PC-9 (cell line): ENCODE measurements at regions of chr10 and their contacts with region 1.

Region 1: GRCh38 chr10:8365935-8366911 is 311.7 kb downstream of the GATA3 start:
- DNase-seq: peak; percentile 94 to 98
- H3K4me3 ChIP-seq: peak overlapping the region; percentile 34; the same call in 1 of the 2 replicates
- H3K27ac ChIP-seq: peak overlapping the region; percentile 98
- H3K4me1 ChIP-seq: peaks cover 30% of the 10 kb centered on the region
- H3K27me3 ChIP-seq: no peaks in the 10 kb centered on the region
- CTCF ChIP-seq: no peak

Region 2: DNA sequence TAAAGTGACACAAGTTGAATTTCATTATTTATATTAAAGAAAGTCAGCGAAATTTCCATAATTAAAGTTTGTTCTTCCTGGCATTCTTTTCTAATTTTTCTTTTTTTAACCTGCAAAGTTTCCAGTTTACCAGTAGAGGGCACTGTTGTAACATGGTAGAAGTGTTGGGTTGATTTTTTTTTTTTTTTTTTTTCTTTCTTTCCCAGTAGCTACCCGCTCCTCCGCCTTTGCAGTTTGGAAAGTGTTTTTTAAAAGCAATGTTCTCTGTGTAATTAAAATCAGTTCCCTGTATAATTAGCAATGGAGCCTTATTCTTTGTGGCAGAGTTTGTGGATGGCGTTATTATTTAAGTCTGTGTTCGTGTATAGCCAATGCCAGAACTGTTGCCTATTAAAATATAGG is 494.2 kb before region 1 on chr10:
- CTCF ChIA-PET with region 1: no interaction called
- POLR2A ChIA-PET with region 1: no interaction called
- intact Hi-C with region 1: loop called (anchors 1 kb)
- DNase-seq: peak in 1 of 2 experiments; percentile 5
- H3K4me3 ChIP-seq: peak overlapping the region; percentile 54; the same call in 1 of the 2 replicates
- H3K27ac ChIP-seq: no peak overlapping the region
- H3K4me1 ChIP-seq: peaks cover 8% of the 10 kb centered on the region
- H3K27me3 ChIP-seq: no peaks in the 10 kb centered on the region
- CTCF ChIP-seq: peak; percentile 74

Region 3: GRCh38 chr10:8088504-8088903 is 277.7 kb before region 1 on chr10:
- CTCF ChIA-PET with region 1: no interaction called
- POLR2A ChIA-PET with region 1: no interaction called
- intact Hi-C with region 1: no loop called
- DNase-seq: no peak
- H3K4me3 ChIP-seq: no peak overlapping the region
- H3K27ac ChIP-seq: no peak overlapping the region
- H3K4me1 ChIP-seq: no peaks in the 10 kb centered on the region
- H3K27me3 ChIP-seq: no peaks in the 10 kb centered on the region
- CTCF ChIP-seq: no peak

Region 4: GRCh38 chr10:8404391-8405120 is 38.3 kb after region 1 on chr10:
- CTCF ChIA-PET with region 1: no interaction called
- POLR2A ChIA-PET with region 1: no interaction called
- intact Hi-C with region 1: loop called (anchors 1 kb)
- DNase-seq: peak; percentile 24 to 77
- H3K4me3 ChIP-seq: peak overlapping the region; percentile 15; the same call in 1 of the 2 replicates
- H3K27ac ChIP-seq: peak overlapping the region; percentile 83
- H3K4me1 ChIP-seq: peaks cover 35% of the 10 kb centered on the region
- H3K27me3 ChIP-seq: no peaks in the 10 kb centered on the region
- CTCF ChIP-seq: no peak

Region 5: GRCh38 chr10:8616166-8616565 is 249.9 kb after region 1 on chr10:
- CTCF ChIA-PET with region 1: no interaction called
- POLR2A ChIA-PET with region 1: no interaction called
- intact Hi-C with region 1: loop called (anchors 1 kb)
- DNase-seq: peak; percentile 43 to 80
- H3K4me3 ChIP-seq: no peak overlapping the region
- H3K27ac ChIP-seq: peak overlapping the region; percentile 70
- H3K4me1 ChIP-seq: peaks cover 36% of the 10 kb centered on the region
- H3K27me3 ChIP-seq: no peaks in the 10 kb centered on the region
- CTCF ChIP-seq: no peak

Region 6: GRCh38 chr10:8705415-8705814 is 339.2 kb after region 1 on chr10:
- CTCF ChIA-PET with region 1: no interaction called
- POLR2A ChIA-PET with region 1: no interaction called
- intact Hi-C with region 1: loop called (anchors 1 kb)
- DNase-seq: no peak
- H3K4me3 ChIP-seq: no peak overlapping the region
- H3K27ac ChIP-seq: no peak overlapping the region
- H3K4me1 ChIP-seq: peaks cover 36% of the 10 kb centered on the region
- H3K27me3 ChIP-seq: no peaks in the 10 kb centered on the region
- CTCF ChIP-seq: no peak

Region 7: GRCh38 chr10:9302120-9302746 is 936.0 kb after region 1 on chr10:
- CTCF ChIA-PET with region 1: no interaction called
- POLR2A ChIA-PET with region 1: no interaction called
- intact Hi-C with region 1: loop called (anchors 5 kb)
- DNase-seq: peak in 1 of 2 experiments; percentile 61
- H3K4me3 ChIP-seq: no peak overlapping the region
- H3K27ac ChIP-seq: no peak overlapping the region
- H3K4me1 ChIP-seq: peaks cover 8% of the 10 kb centered on the region; the same call in 1 of the 2 replicates
- H3K27me3 ChIP-seq: no peaks in the 10 kb centered on the region
- CTCF ChIP-seq: peak; percentile 72

Region 8: DNA sequence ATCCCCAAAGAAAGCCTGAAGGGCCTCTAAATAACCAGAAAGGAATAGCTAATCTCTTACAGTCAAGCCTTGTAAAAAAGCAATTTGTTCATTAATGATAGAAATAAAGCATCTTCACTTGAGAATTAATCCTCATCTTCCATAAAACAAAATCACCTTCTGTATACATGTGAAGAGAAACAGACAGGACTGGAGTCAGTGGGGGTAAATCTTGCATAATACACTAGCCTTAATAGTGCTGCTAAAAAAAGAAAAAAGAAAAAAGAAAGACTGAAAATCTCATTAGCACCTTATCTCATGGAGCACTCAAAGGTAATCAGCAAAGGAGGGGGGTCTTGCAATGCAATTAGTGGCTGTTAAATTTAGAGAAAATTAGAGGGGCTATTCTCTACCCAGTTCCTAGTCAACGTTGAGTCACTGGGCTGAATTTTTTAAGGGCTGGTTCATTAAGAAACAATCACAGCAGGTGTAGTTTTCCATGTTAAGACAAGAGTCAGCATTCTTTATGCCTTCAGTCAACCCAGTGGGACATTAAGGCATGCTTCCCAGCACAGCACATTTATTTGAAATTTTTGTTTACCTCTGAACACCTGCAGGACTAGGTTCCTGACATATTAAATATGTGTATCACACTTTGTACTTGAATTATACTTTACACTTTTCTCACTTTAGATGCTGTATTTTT is 1195.7 kb after region 1 on chr10:
- CTCF ChIA-PET with region 1: no interaction called
- POLR2A ChIA-PET with region 1: no interaction called
- intact Hi-C with region 1: no loop called
- DNase-seq: no peak
- H3K4me3 ChIP-seq: no peak overlapping the region
- H3K27ac ChIP-seq: no peak overlapping the region
- H3K4me1 ChIP-seq: no peaks in the 10 kb centered on the region
- H3K27me3 ChIP-seq: no peaks in the 10 kb centered on the region
- CTCF ChIP-seq: no peak